ENCODE measurements at regions of chr11 and their contacts with region 1.

Region 1: DNA sequence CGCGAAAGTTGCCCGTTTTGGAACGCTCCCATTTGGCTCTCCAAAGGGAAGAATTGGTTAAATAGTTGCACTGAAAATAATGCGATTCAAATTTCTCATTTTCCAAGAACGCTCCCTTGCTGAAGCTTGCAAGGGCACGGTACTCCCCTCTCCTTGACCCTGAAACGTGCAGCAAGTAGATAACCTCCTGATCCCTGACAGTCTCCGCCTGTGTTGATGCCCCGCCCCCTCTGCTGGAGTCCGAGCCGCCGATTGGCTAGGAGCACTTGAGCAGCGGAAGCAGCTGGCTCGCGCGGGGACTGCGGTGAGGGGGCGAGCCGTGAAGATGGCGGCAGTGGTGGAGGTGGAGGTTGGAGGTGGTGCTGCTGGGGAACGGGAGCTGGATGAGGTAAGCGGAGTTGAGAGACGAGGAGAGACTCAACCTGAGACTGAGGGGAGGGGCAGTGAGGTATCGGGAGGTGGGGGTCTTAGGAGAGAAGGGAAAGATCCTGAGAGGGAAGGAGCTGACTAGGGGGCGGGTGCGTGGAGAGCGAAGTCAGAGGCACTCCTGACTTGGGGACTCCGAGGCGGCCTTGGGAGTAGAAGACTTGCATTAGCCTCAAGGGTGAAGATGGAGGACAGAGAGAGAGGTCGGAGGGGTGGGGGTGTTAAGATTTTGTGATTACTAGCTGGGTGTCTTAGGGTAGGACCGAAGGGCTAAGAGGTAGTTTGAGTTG is at the start of gene RNF121:
- DNase-seq: peak; percentile 96 to 98 (median 96)
- ATAC-seq: peak; percentile 97
- H3K4me3 ChIP-seq: peak within 1 kb of the TSS; percentile 53
- H3K27ac ChIP-seq: peak within 1 kb of the TSS; percentile 99
- H3K4me1 ChIP-seq: peaks cover 6 to 10% of the 10 kb centered on the region in 2 experiments; a peak in 2 of 5 replicates
- H3K27me3 ChIP-seq: no peaks in the 10 kb centered on the region
- CTCF ChIP-seq: no peak
- EP300 ChIP-seq: no peak
- POLR2A ChIP-seq: peak; percentile 91
- RAD21 ChIP-seq: no peak
- polyA plus RNA-seq, gene RNF121: 8.0 to 11.4 TPM

Region 2: GRCh38 chr11:71940561-71941219 is 11.8 kb after region 1 on chr11:
- CTCF ChIA-PET with region 1: no interaction called
- POLR2A ChIA-PET with region 1: interaction called, 55 read pairs
- in situ Hi-C with region 1: no loop called
- intact Hi-C with region 1: no loop called
- DNase-seq: no peak
- ATAC-seq: no peak; the same call in 2 of the 3 replicates
- H3K4me3 ChIP-seq: no peak overlapping the region
- H3K27ac ChIP-seq: no peak overlapping the region
- H3K4me1 ChIP-seq: peaks cover 0 to 20% of the 10 kb centered on the region in 2 experiments; a peak in 2 of 5 replicates
- H3K27me3 ChIP-seq: no peaks in the 10 kb centered on the region
- CTCF ChIP-seq: no peak
- EP300 ChIP-seq: no peak
- POLR2A ChIP-seq: no peak
- RAD21 ChIP-seq: no peak

Region 3: DNA sequence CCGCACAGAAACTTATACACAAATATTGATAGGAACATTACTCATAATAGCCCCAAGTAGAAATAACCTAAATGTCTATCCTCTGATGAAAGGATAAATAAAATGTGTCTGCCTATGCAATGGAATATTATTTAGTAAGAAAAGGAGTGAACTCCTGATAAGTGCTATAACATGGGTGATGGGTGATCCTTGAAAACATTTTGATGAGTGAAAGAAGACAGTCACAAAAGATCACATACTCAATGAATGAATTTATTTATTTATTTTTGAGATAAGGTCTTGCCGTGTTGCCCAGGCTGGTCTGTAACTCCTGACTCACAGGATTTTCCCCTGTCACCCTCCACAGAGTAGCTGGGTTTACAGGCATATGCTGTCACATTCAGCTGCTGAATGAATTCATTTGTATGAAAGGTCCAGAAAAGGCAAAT is 17.3 kb after region 1 on chr11:
- CTCF ChIA-PET with region 1: no interaction called
- POLR2A ChIA-PET with region 1: interaction called, 55 read pairs
- in situ Hi-C with region 1: no loop called
- intact Hi-C with region 1: no loop called
- DNase-seq: no peak
- ATAC-seq: no peak
- H3K4me3 ChIP-seq: no peak overlapping the region
- H3K27ac ChIP-seq: no peak overlapping the region
- H3K4me1 ChIP-seq: peaks cover 30 to 35% of the 10 kb centered on the region in 2 experiments
- H3K27me3 ChIP-seq: no peaks in the 10 kb centered on the region
- CTCF ChIP-seq: no peak
- EP300 ChIP-seq: no peak
- POLR2A ChIP-seq: no peak
- RAD21 ChIP-seq: no peak

Measured in K562 (cell line).